Activated naive CD4-positive, alpha-beta T cell treated with anti-CD3 and anti-CD28 coated beads, Interleukin-2, amount 10 ng/mL, durations not matched to agents 7 days and 5 days (primary cell): ENCODE measurements at regions of chr19 and their contacts with region 1.

Region 1: DNA sequence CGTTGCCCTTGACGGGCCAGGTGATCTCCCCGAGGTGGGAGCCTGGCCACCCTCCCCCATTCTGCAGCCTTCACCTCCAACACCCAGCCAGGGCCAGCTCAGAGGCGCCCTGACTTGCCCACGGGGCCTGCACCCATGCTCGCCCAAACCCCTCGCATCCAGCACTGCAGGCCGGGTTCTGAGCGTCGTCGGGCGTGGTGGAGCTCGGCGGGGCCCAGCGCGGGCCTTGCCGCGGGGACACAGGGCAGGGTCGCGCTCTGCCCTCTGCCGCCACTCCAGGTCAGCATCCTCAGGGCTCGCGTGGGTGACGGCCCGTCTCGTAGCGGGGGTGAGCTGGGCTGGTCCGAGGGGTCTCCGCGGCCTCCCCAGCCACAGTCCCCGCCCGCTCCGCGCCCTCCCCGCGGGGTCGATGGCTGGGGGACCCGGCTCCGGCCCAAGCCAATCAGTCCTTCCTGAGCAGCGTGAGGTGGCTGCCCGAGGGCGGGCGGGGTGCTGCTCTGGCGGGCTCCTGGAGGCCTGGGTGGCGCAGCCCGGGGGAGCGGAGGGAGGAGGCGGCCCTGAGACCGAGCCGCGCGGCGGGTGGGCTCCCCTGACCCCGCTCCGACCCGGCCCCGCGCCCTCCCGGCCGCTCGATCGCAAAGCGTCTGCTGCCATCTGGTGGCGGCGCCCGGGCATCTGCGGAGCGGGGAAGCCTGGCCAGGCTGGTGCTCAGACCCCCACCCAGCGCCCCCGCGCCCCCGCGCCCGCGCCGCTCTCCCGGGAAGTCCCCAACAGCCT is 61.4 kb downstream of the CCNE1 start:
- DNase-seq: peak; percentile 77
- H3K4me3 Mint-ChIP-seq: peak overlapping the region; percentile 65
- H3K27ac Mint-ChIP-seq: no peak overlapping the region
- H3K4me1 Mint-ChIP-seq: peaks cover 18% of the 10 kb centered on the region
- H3K27me3 Mint-ChIP-seq: peaks cover 48% of the 10 kb centered on the region

Region 2: GRCh38 chr19:29724746-29725145 is 148.5 kb before region 1 on chr19:
- CTCF ChIA-PET with region 1: interaction called, 71 read pairs
- DNase-seq: no peak
- H3K4me3 Mint-ChIP-seq: no peak overlapping the region
- H3K27ac Mint-ChIP-seq: no peak overlapping the region
- H3K4me1 Mint-ChIP-seq: peaks cover 14% of the 10 kb centered on the region
- H3K27me3 Mint-ChIP-seq: peaks cover 50% of the 10 kb centered on the region

Region 3: GRCh38 chr19:29735800-29736199 is 137.4 kb before region 1 on chr19:
- CTCF ChIA-PET with region 1: interaction called, 71 read pairs
- DNase-seq: no peak
- H3K4me3 Mint-ChIP-seq: no peak overlapping the region
- H3K27ac Mint-ChIP-seq: no peak overlapping the region
- H3K4me1 Mint-ChIP-seq: no peaks in the 10 kb centered on the region
- H3K27me3 Mint-ChIP-seq: peaks cover 29% of the 10 kb centered on the region

Region 4: GRCh38 chr19:29761575-29762232 is 111.5 kb before region 1 on chr19:
- CTCF ChIA-PET with region 1: interaction called, 55 read pairs
- DNase-seq: no peak
- H3K4me3 Mint-ChIP-seq: no peak overlapping the region
- H3K27ac Mint-ChIP-seq: no peak overlapping the region
- H3K4me1 Mint-ChIP-seq: peaks cover 3% of the 10 kb centered on the region
- H3K27me3 Mint-ChIP-seq: peaks cover 35% of the 10 kb centered on the region

Region 5: DNA sequence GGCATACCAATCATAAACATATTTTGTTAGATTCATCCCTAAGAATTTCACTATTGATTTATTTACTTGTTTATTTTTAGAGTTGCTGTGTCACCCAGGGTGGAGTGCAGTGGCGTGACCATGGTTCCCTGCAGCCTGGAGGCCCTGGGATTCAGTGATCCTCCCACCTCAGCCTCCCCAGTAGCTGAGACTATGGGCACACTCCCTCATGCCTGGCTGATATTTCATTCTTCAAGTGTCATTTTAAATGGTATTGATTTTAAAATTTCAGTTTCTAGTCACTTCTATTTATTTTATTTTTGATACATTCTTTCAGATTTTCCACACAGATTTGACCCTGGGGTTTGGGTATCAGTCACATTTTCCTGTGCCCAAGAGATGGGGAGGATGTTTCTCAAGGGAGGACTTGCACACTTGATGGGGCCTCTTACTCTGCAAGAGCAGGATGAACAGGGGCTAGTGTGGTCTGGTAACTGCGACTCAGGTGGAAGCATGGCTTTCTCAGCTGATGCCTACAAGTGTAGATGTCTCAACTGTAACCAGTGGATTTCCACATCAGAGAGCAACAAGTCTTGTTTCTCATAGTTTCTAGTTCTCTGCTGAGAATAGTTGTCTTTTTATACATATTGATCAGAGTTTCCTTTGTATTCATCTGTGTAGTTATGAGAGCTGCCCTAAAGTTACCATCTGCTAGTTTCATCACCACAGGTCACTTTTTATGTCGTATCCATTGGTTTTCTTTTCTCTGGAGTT is 21.3 kb before region 1 on chr19:
- CTCF ChIA-PET with region 1: interaction called, 28 read pairs
- DNase-seq: no peak
- H3K4me3 Mint-ChIP-seq: no peak overlapping the region
- H3K27ac Mint-ChIP-seq: no peak overlapping the region
- H3K4me1 Mint-ChIP-seq: peaks cover 7% of the 10 kb centered on the region
- H3K27me3 Mint-ChIP-seq: peaks cover 9% of the 10 kb centered on the region

Region 6: GRCh38 chr19:29858000-29858596 is 15.1 kb before region 1 on chr19:
- CTCF ChIA-PET with region 1: interaction called, 28 read pairs
- DNase-seq: peak; percentile 60
- H3K4me3 Mint-ChIP-seq: no peak overlapping the region
- H3K27ac Mint-ChIP-seq: no peak overlapping the region
- H3K4me1 Mint-ChIP-seq: no peaks in the 10 kb centered on the region
- H3K27me3 Mint-ChIP-seq: peaks cover 36% of the 10 kb centered on the region

Region 7: GRCh38 chr19:29908963-29909944 is 36.0 kb after region 1 on chr19:
- CTCF ChIA-PET with region 1: no interaction called
- DNase-seq: no peak
- H3K4me3 Mint-ChIP-seq: no peak overlapping the region
- H3K27ac Mint-ChIP-seq: no peak overlapping the region
- H3K4me1 Mint-ChIP-seq: no peaks in the 10 kb centered on the region
- H3K27me3 Mint-ChIP-seq: peaks cover 9% of the 10 kb centered on the region